ENCODE measurements at regions of chr7 and their contacts with region 1.

Region 1: DNA sequence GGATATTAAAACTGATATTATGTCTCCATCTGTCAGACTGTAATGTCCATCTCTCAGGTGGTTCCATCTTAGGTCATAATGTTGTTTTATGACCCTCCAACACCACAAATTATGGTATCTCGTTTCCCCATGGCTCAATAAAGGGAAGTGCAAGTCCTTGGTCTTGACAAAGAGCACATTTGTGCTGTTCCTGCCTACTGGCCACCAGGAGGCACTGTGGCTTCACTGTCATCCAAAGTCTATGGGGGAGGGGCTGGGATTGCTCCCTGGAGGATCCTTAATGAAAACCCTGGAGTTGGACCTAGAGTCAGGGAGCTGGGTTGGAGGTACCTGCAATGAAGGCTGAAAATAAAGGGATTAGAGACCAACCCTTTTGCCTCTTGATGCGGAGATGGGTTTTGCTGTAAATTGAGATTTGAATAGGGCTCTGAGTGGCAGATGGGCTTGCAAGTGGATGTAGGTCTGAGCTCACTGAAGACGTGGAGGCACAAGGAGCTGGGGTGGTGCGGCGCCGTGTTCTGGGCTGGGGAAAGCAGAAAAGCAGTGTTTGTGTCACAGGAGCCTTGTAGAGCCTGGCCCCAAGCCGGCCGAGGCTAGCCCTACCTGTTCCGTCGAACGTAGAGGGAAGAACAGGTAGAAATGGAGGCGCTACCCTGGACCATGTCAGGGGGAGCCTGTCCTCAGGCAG is 180.5 kb upstream of the PRSS58 start:
- DNase-seq: peak; percentile 49
- ATAC-seq: peak; percentile 75
- H3K4me3 ChIP-seq: no peak overlapping the region
- H3K27ac ChIP-seq: no peak overlapping the region
- H3K4me1 ChIP-seq: peaks cover 26 to 41% of the 10 kb centered on the region in 2 experiments
- H3K27me3 ChIP-seq: no peaks in the 10 kb centered on the region
- CTCF ChIP-seq: peak; percentile 73 to 97 (median 95)
- POLR2A ChIP-seq: no peak
- RAD21 ChIP-seq: peak; percentile 71

Region 2: DNA sequence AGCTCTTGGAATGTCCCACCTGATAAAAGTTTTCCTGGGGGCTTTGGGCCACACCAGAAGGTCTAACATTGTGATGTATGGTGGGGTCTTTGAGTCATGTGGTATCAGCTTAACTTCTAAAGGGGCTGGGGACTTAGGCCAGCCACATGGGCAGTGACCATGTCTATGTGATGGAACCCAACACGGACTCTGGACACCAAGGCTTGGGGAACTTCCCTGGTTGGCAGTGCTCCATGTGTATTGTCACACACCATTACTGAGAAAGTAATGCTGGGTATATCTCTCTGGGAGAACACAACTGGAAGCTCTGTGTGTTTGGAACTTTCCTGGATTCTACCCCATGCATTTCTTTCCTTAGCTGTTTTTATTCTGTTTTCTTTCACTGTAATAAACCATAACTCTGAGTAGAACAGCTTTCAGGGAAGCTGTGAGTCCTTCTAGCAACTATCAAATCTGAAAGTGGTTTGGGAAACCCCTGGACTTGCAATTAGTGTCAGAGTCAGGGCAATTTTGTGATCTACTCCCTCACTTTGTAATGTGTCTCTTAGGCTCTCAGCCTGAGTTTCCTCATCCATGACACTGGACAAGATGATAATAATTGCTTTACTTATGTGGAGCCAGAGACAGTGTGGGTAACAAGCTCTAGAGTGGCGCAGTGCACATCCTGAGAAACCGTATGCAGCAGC is 915.6 kb before region 1 on chr7:
- CTCF ChIA-PET with region 1: no interaction called
- POLR2A ChIA-PET with region 1: no interaction called
- RAD21 ChIA-PET with region 1: no interaction called
- intact Hi-C with region 1: no loop called
- DNase-seq: no peak
- ATAC-seq: no peak
- H3K4me3 ChIP-seq: no peak overlapping the region
- H3K27ac ChIP-seq: no peak overlapping the region
- H3K4me1 ChIP-seq: no peaks in the 10 kb centered on the region
- H3K27me3 ChIP-seq: peaks cover 21% of the 10 kb centered on the region
- CTCF ChIP-seq: no peak
- POLR2A ChIP-seq: no peak
- RAD21 ChIP-seq: no peak

Region 3: GRCh38 chr7:142459551-142459963 is 21.2 kb after region 1 on chr7:
- CTCF ChIA-PET with region 1: interaction called, 12 read pairs
- POLR2A ChIA-PET with region 1: no interaction called
- RAD21 ChIA-PET with region 1: no interaction called
- intact Hi-C with region 1: loop called (anchors 2 kb)
- DNase-seq: peak; percentile 41
- ATAC-seq: peak; percentile 97
- H3K4me3 ChIP-seq: no peak overlapping the region
- H3K27ac ChIP-seq: no peak overlapping the region
- H3K4me1 ChIP-seq: peaks cover 0 to 10% of the 10 kb centered on the region in 2 experiments; a peak in 2 of 4 replicates
- H3K27me3 ChIP-seq: no peaks in the 10 kb centered on the region
- CTCF ChIP-seq: peak; percentile 70 to 85 (median 77)
- POLR2A ChIP-seq: no peak
- RAD21 ChIP-seq: peak; percentile 71

Measured in HCT116 (cell line).